ENCODE measurements at regions of chr2 and their contacts with region 1.

Region 1: DNA sequence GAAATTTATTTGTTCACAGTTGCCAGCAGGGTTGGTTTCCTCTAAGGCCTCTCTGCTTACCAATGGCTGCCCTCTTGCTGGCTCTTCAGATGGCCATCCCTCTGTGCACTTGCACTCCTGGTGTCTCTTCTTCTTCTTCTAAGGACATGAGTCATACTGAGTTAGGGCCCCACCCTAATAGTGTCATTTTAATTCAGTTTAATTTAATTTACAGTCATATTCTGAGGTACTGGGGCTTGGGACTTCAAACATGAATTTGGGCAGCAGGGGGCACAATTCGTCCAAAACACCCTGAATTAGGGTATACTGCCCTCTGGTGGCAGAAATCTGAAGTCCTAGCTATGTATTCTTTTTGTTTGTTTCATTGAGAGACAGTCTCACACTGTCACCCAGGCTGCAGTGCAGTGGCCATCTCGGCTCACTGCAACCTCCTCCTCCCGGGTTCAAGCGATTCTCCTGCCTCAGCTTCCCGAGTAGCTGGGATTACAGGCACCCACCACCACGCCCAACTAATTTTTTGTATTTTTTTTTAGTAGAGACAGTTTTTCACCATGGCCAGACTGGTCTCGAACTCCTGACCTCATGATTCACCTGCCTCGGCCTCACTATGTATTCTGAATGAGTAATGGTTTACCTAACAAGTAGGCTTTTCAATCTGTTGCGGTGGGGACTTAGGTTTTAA is 19.8 kb downstream of the SLC4A1AP start:
- DNase-seq: peak; percentile 71
- ATAC-seq: peak; percentile 87
- H3K4me3 Mint-ChIP-seq: peak overlapping the region; percentile 59
- H3K27ac Mint-ChIP-seq: peak overlapping the region; percentile 80
- H3K4me1 Mint-ChIP-seq: peaks cover 19% of the 10 kb centered on the region
- H3K27me3 Mint-ChIP-seq: no peaks in the 10 kb centered on the region

Region 2: GRCh38 chr2:27663463-27664249 is 19.9 kb before region 1 on chr2 and contains the starts of genes SLC4A1AP and SUPT7L:
- POLR2A ChIA-PET with region 1: interaction called, 12 read pairs
- DNase-seq: peak; percentile 82
- ATAC-seq: peak; percentile 74
- H3K4me3 Mint-ChIP-seq: peak within 1 kb of the TSS; percentile 99
- H3K27ac Mint-ChIP-seq: peak within 1 kb of the TSS; percentile 100
- H3K4me1 Mint-ChIP-seq: peaks cover 34% of the 10 kb centered on the region
- H3K27me3 Mint-ChIP-seq: no peaks in the 10 kb centered on the region
- total RNA-seq, gene SLC4A1AP: 25.1 to 27.4 TPM
- total RNA-seq, gene SUPT7L: 42.8 to 43.4 TPM